ENCODE measurements at regions of chr3 and their contacts with region 1.

Region 1: GRCh38 chr3:177538750-177539730 is 341.8 kb upstream of the TBL1XR1 start:
- DNase-seq: peak; percentile 22
- H3K4me3 Mint-ChIP-seq: peak overlapping the region; percentile 32
- H3K27ac Mint-ChIP-seq: peak overlapping the region; percentile 48
- H3K4me1 Mint-ChIP-seq: peaks cover 27% of the 10 kb centered on the region
- H3K27me3 Mint-ChIP-seq: no peaks in the 10 kb centered on the region

Region 2: DNA sequence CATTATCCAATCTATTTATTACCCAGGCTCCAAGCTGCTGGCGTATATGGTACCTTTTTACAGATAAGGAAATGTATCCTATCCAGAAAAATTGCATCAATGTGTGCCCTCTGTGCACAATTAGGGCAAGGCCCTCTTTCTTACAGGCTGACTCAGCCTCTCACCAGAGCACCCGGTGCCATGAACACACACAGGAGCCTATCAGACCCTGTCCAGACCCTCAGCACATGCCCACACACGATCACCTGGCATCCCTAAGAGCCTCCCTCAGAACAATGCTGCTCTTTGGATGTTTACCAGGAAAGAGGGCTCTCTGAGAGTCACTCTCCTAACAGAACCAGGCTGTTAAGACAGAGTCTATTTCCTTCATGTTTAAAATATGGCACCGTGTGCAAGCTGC is 118.2 kb after region 1 on chr3:
- CTCF ChIA-PET with region 1: no interaction called
- intact Hi-C with region 1: no loop called
- DNase-seq: no peak
- H3K4me3 Mint-ChIP-seq: no peak overlapping the region
- H3K27ac Mint-ChIP-seq: no peak overlapping the region
- H3K4me1 Mint-ChIP-seq: no peaks in the 10 kb centered on the region
- H3K27me3 Mint-ChIP-seq: no peaks in the 10 kb centered on the region

Region 3: DNA sequence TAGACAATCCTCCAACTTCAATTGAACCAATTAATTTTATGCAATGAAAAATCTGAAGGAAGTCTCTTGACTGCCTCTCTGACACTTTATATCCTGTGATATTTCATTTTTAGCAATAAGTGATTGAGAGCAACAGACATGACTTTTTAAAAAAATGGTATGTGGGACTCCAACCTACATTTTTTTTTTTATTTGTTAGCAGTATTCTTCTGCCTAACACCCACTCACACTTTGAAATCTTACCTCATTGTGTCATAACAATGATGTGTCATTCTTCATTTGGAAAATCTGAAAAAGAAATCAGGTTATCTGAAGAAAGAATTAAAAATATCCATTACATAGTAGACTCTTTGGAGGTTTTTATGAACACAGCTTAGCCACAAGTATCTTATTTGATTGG is 455.9 kb after region 1 on chr3:
- CTCF ChIA-PET with region 1: no interaction called
- intact Hi-C with region 1: loop called (anchors 5 kb)
- DNase-seq: no peak
- H3K4me3 Mint-ChIP-seq: no peak overlapping the region
- H3K27ac Mint-ChIP-seq: peak overlapping the region; percentile 67
- H3K4me1 Mint-ChIP-seq: peaks cover 30% of the 10 kb centered on the region
- H3K27me3 Mint-ChIP-seq: no peaks in the 10 kb centered on the region